CD8-positive, alpha-beta memory T cell (primary cell): ENCODE measurements at regions of chr1 and their contacts with region 1.

Region 1: DNA sequence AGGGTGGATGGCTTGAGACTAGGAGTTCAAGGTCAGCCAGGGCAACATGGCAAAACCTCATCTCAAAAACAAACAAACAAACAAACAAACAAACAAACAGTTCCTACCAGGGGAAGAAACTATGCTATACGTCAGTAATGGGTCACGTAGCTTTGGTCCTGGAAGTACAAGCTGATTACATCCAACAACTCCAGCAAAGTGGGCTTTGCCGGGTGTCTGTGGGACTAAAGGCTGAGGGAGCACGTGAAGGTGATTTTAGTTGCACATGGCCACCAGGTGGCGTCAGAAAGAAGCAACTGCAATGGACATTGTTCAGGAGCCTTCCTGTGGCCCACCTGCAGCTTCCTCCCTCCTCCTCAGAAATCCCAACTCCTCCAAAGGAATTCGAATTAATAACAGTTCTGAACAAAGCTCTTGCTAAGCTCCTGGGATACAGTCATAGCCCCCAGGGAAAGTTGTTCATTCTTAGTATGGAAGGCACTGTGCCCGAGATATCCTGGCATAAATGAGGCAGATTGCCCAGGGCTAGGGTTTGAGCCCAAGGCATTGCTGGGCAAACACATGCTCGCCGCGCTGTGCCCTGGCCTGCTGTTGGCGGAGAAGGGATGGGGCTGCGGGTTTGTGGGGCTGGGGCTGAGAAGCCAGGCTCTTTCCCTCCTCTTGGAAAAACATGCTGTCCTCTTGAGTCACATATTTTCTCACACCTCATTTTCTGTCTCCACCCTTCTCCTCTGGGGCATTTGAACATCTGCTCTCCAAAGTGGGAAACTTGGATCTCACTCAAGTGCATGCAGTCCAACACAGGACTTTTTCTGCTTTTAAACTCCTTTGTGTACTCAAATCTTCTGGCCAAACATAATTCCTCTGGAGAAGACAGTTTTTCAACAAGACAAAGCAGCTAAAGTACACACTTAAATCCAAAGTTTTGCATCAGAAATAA is 28.6 kb downstream of the AKNAD1 start:
- DNase-seq: peak; percentile 48 to 79 (median 63)
- H3K4me3 ChIP-seq: no peak overlapping the region
- H3K4me3 Mint-ChIP-seq: no peak overlapping the region
- H3K27ac ChIP-seq: no peak overlapping the region
- H3K27ac Mint-ChIP-seq: peak overlapping the region in 2 of 8 donors; percentile 12 to 46
- H3K4me1 ChIP-seq: no peaks in the 10 kb centered on the region
- H3K4me1 Mint-ChIP-seq: peaks cover 0 to 5% (median 4%) of the 10 kb centered on the region in 3 donors
- H3K27me3 ChIP-seq: no peaks in the 10 kb centered on the region
- H3K27me3 Mint-ChIP-seq: no peaks in the 10 kb centered on the region

Region 2: DNA sequence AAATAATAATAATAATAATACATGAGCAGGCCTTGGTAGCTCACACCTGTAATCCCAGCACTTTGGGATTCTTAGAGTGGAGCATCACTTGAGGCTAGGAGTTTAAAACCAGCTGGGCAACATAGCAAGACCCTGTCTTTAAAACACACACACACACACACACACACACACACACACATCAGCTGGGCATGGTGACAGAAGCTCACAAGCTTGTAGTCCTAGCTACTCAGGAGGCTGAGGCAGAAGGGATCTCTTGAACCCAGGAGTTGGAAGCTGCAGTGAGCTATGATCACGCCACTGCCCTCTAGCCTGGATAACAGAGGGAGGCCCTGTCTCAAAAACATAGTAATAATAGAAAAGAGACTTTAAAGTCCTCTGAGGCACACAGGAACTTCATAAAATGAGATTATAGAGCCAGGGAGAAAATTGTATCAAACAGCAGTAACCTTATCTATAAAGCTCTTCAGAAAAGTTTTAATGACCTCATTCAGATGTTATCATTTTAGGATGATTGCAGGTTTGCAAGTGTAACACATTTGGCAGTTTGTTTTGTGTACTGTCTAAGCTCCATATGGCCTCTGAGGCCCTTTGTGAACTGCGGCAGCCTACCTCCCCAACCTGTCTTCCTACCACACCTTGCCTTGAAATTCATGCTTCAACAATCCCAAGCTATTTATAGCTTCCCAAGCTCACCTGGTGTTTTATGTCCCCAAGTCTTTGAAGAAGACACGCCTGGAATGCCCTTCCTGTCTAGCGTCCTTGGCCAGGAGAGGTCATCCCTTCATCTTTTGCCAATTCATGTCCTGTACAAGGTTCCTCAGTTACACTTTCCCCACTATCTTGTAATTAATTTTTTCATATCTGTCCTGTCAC is 37.0 kb after region 1 on chr1:
- CTCF ChIA-PET with region 1: interaction called, 10 read pairs
- POLR2A ChIA-PET with region 1: no interaction called
- DNase-seq: no peak
- H3K4me3 ChIP-seq: no peak overlapping the region
- H3K4me3 Mint-ChIP-seq: no peak overlapping the region
- H3K27ac ChIP-seq: no peak overlapping the region
- H3K27ac Mint-ChIP-seq: no peak overlapping the region
- H3K4me1 ChIP-seq: no peaks in the 10 kb centered on the region
- H3K4me1 Mint-ChIP-seq: no peaks in the 10 kb centered on the region
- H3K27me3 ChIP-seq: no peaks in the 10 kb centered on the region
- H3K27me3 Mint-ChIP-seq: peaks cover 12 to 28% of the 10 kb centered on the region in 2 donors

Region 3: GRCh38 chr1:108897865-108898720 is 69.8 kb after region 1 on chr1:
- CTCF ChIA-PET with region 1: interaction called, 79 read pairs
- POLR2A ChIA-PET with region 1: interaction called, 7 read pairs
- DNase-seq: peak in 3 of 5 donors; percentile 13 to 46 (median 45)
- H3K4me3 ChIP-seq: no peak overlapping the region
- H3K4me3 Mint-ChIP-seq: no peak overlapping the region
- H3K27ac ChIP-seq: no peak overlapping the region
- H3K27ac Mint-ChIP-seq: no peak overlapping the region
- H3K4me1 ChIP-seq: no peaks in the 10 kb centered on the region
- H3K4me1 Mint-ChIP-seq: no peaks in the 10 kb centered on the region
- H3K27me3 ChIP-seq: no peaks in the 10 kb centered on the region
- H3K27me3 Mint-ChIP-seq: no peaks in the 10 kb centered on the region